CD8-positive, alpha-beta T cell (primary cell): ENCODE measurements at regions of chr21 and their contacts with region 1.

Region 1: GRCh38 chr21:36113647-36114428 is 21.0 kb upstream of the CBR3 start:
- DNase-seq: peak in 6 of 9 experiments; percentile 26 to 90 (median 62)
- ATAC-seq: peak; percentile 82
- H3K4me3 ChIP-seq: peak overlapping the region; percentile 51 to 71
- H3K4me3 Mint-ChIP-seq: peak overlapping the region; percentile 81
- H3K27ac ChIP-seq: peak overlapping the region; percentile 57 to 61
- H3K27ac Mint-ChIP-seq: peak overlapping the region; percentile 91
- H3K4me1 ChIP-seq: peaks cover 37% of the 10 kb centered on the region
- H3K4me1 Mint-ChIP-seq: peaks cover 32% of the 10 kb centered on the region
- H3K27me3 ChIP-seq: no peaks in the 10 kb centered on the region
- H3K27me3 Mint-ChIP-seq: no peaks in the 10 kb centered on the region
- CTCF ChIP-seq: no peak

Region 2: GRCh38 chr21:34693192-34693810 is 1420.5 kb before region 1 on chr21:
- CTCF ChIA-PET with region 1: no interaction called
- POLR2A ChIA-PET with region 1: no interaction called
- intact Hi-C with region 1: loop called in 1 of 2 experiments (anchors 5 kb)
- DNase-seq: peak in 8 of 9 experiments; percentile 15 to 75 (median 46)
- ATAC-seq: no peak
- H3K4me3 ChIP-seq: no peak overlapping the region
- H3K4me3 Mint-ChIP-seq: no peak overlapping the region
- H3K27ac ChIP-seq: no peak overlapping the region
- H3K27ac Mint-ChIP-seq: no peak overlapping the region
- H3K4me1 ChIP-seq: no peaks in the 10 kb centered on the region
- H3K4me1 Mint-ChIP-seq: no peaks in the 10 kb centered on the region
- H3K27me3 ChIP-seq: no peaks in the 10 kb centered on the region
- H3K27me3 Mint-ChIP-seq: peaks cover 15% of the 10 kb centered on the region
- CTCF ChIP-seq: peak; percentile 79

Region 3: GRCh38 chr21:35303085-35303484 is 810.8 kb before region 1 on chr21:
- CTCF ChIA-PET with region 1: no interaction called
- POLR2A ChIA-PET with region 1: no interaction called
- intact Hi-C with region 1: no loop called
- DNase-seq: no peak
- ATAC-seq: no peak
- H3K4me3 ChIP-seq: no peak overlapping the region
- H3K4me3 Mint-ChIP-seq: no peak overlapping the region
- H3K27ac ChIP-seq: no peak overlapping the region
- H3K27ac Mint-ChIP-seq: no peak overlapping the region
- H3K4me1 ChIP-seq: no peaks in the 10 kb centered on the region
- H3K4me1 Mint-ChIP-seq: no peaks in the 10 kb centered on the region
- H3K27me3 ChIP-seq: no peaks in the 10 kb centered on the region
- H3K27me3 Mint-ChIP-seq: no peaks in the 10 kb centered on the region
- CTCF ChIP-seq: no peak

Region 4: GRCh38 chr21:35635261-35635660 is 478.6 kb before region 1 on chr21:
- CTCF ChIA-PET with region 1: no interaction called
- POLR2A ChIA-PET with region 1: no interaction called
- intact Hi-C with region 1: no loop called
- DNase-seq: no peak
- ATAC-seq: no peak
- H3K4me3 ChIP-seq: no peak overlapping the region
- H3K4me3 Mint-ChIP-seq: no peak overlapping the region
- H3K27ac ChIP-seq: no peak overlapping the region
- H3K27ac Mint-ChIP-seq: no peak overlapping the region
- H3K4me1 ChIP-seq: no peaks in the 10 kb centered on the region
- H3K4me1 Mint-ChIP-seq: no peaks in the 10 kb centered on the region
- H3K27me3 ChIP-seq: no peaks in the 10 kb centered on the region
- H3K27me3 Mint-ChIP-seq: peaks cover 14% of the 10 kb centered on the region
- CTCF ChIP-seq: no peak

Region 5: DNA sequence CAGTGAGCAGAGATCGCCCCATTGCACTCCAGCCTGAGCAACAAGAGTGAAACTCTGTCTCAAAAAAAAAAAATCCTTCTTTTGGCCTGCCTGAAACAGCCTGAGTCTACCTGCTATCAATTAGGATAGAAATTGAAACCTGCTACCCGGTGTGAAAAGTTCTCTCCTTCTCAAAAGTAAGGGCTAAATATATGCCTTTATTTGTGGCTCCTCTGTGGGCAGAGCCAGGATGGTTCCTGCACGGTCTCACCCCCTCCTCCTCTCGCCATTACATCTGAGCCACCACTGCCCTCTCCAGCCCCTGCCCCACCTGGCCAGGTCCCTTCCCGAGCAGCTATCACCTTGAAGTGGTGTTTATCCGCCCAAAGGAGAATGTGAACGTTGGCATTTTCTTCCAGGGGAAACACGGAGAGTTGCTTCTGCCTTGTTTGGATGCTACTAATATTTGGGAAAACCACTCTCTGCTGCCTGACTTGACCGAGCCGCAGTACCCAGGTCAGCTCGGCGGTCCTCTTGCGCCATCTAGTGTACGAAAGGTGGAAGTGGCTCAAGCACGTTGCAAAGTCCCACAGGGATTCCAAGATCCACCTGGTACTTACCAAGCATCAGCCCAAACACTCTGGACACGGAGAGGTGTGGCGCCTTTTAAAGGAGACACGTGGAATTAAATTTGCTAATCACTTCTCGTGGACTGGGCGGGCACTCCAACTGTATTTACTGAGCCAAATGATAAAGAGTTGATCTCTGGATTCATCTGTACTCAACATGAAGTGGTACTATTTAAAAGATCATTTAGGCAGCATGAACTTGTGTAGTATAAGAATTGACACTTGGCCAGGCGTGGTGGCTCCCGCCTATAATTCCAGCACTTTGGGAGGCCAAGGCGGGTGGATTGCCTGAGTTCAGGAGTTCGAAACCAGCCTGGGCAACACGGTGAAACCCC is 85.4 kb before region 1 on chr21:
- CTCF ChIA-PET with region 1: interaction called, 9 read pairs
- POLR2A ChIA-PET with region 1: no interaction called
- intact Hi-C with region 1: loop called in 1 of 2 experiments (anchors 1 kb)
- DNase-seq: peak; percentile 23 to 82 (median 66)
- ATAC-seq: peak; percentile 84
- H3K4me3 ChIP-seq: no peak overlapping the region
- H3K4me3 Mint-ChIP-seq: no peak overlapping the region
- H3K27ac ChIP-seq: no peak overlapping the region
- H3K27ac Mint-ChIP-seq: no peak overlapping the region
- H3K4me1 ChIP-seq: peaks cover 4% of the 10 kb centered on the region
- H3K4me1 Mint-ChIP-seq: peaks cover 2% of the 10 kb centered on the region
- H3K27me3 ChIP-seq: no peaks in the 10 kb centered on the region
- H3K27me3 Mint-ChIP-seq: no peaks in the 10 kb centered on the region
- CTCF ChIP-seq: peak; percentile 97

Region 6: DNA sequence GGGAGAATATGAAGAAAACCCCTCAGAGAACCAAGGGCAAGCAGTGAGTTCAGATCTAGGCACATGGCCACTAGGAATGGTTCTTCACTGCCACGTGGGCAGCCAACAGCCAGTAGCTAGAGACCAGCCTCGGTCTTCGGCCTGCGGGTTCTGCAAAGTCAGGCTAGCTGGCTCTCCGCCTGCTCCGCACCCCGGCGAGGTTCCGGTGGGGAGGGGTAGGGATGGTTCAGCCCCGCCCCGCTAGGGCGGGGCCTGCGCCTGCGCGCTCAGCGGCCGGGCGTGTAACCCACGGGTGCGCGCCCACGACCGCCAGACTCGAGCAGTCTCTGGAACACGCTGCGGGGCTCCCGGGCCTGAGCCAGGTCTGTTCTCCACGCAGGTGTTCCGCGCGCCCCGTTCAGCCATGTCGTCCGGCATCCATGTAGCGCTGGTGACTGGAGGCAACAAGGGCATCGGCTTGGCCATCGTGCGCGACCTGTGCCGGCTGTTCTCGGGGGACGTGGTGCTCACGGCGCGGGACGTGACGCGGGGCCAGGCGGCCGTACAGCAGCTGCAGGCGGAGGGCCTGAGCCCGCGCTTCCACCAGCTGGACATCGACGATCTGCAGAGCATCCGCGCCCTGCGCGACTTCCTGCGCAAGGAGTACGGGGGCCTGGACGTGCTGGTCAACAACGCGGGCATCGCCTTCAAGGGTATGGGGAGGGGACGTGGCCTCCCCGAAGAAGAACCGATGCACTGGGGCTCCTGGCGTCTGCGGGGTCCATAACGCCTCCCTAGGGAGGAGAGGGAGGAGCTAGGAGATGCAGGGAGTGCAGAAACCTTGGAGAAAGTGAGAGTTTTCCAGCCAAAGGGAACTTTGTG is 43.9 kb before region 1 on chr21 and contains the start of gene CBR1:
- CTCF ChIA-PET with region 1: interaction called, 5 read pairs
- POLR2A ChIA-PET with region 1: interaction called, 4 read pairs
- intact Hi-C with region 1: loop called in 1 of 2 experiments (anchors 2 kb)
- DNase-seq: peak; percentile 69 to 94 (median 85)
- ATAC-seq: peak; percentile 98
- H3K4me3 ChIP-seq: peak within 1 kb of the TSS; percentile 59 to 77
- H3K4me3 Mint-ChIP-seq: peak within 1 kb of the TSS; percentile 88
- H3K27ac ChIP-seq: peak within 1 kb of the TSS; percentile 12 to 54
- H3K27ac Mint-ChIP-seq: peak within 1 kb of the TSS; percentile 73
- H3K4me1 ChIP-seq: peaks cover 28% of the 10 kb centered on the region
- H3K4me1 Mint-ChIP-seq: peaks cover 40% of the 10 kb centered on the region
- H3K27me3 ChIP-seq: no peaks in the 10 kb centered on the region
- H3K27me3 Mint-ChIP-seq: no peaks in the 10 kb centered on the region
- CTCF ChIP-seq: no peak
- total RNA-seq, gene CBR1: 4.5 to 5.0 TPM

Region 7: GRCh38 chr21:36135391-36136102 is 21.7 kb after region 1 on chr21:
- CTCF ChIA-PET with region 1: interaction called, 16 read pairs
- POLR2A ChIA-PET with region 1: interaction called, 11 read pairs
- intact Hi-C with region 1: no loop called
- DNase-seq: peak in 7 of 9 experiments; percentile 37 to 74 (median 56)
- ATAC-seq: peak; percentile 72
- H3K4me3 ChIP-seq: peak overlapping the region; percentile 68 to 77
- H3K4me3 Mint-ChIP-seq: peak overlapping the region; percentile 93
- H3K27ac ChIP-seq: peak overlapping the region; percentile 34 to 38
- H3K27ac Mint-ChIP-seq: peak overlapping the region; percentile 87
- H3K4me1 ChIP-seq: peaks cover 20% of the 10 kb centered on the region
- H3K4me1 Mint-ChIP-seq: peaks cover 19% of the 10 kb centered on the region
- H3K27me3 ChIP-seq: no peaks in the 10 kb centered on the region
- H3K27me3 Mint-ChIP-seq: no peaks in the 10 kb centered on the region
- CTCF ChIP-seq: no peak

Region 8: DNA sequence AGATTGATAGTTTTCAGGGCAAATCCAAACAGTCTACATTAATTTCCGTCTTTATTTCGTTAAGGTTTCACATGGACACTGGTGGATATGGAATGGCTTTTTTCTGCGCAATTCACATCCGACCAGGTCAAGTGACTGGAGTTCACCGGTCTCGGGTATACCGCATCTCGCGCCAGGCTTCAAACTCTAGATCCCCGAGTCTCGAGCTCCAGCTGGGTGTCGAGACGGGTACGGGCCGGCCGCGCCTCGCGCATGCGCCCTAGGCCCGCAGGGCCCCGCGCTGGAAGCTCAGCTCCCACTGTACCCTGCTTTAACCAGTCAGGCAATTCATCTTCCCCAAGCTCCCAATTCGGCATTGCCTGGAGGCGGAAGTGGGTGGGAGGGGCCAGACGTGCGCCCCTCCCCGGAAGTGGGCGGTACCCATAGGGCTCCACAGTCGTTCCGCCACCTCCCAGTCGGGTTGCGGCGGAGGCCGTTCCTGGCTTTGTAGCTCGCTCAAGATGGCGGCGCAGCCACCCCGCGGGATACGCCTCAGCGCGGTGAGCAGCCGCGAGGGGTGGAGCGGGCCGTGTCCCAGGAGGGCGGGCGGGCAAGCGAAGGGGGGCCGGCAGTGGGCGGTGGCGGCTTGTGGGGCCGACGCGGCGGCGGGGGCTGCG is 206.1 kb after region 1 on chr21 and contains the start of gene MORC3:
- CTCF ChIA-PET with region 1: no interaction called
- POLR2A ChIA-PET with region 1: interaction called, 13 read pairs
- intact Hi-C with region 1: no loop called
- DNase-seq: peak; percentile 96 to 99 (median 98)
- ATAC-seq: peak; percentile 87
- H3K4me3 ChIP-seq: peak within 1 kb of the TSS; percentile 63 to 74
- H3K4me3 Mint-ChIP-seq: peak within 1 kb of the TSS; percentile 94
- H3K27ac ChIP-seq: peak within 1 kb of the TSS; percentile 84 to 85
- H3K27ac Mint-ChIP-seq: peak within 1 kb of the TSS; percentile 98
- H3K4me1 ChIP-seq: peaks cover 18% of the 10 kb centered on the region
- H3K4me1 Mint-ChIP-seq: peaks cover 36% of the 10 kb centered on the region
- H3K27me3 ChIP-seq: no peaks in the 10 kb centered on the region
- H3K27me3 Mint-ChIP-seq: no peaks in the 10 kb centered on the region
- CTCF ChIP-seq: no peak
- total RNA-seq, gene MORC3: 48.7 to 52.1 TPM